ENCODE measurements at regions of chr17 and their contacts with region 1.

Region 1: DNA sequence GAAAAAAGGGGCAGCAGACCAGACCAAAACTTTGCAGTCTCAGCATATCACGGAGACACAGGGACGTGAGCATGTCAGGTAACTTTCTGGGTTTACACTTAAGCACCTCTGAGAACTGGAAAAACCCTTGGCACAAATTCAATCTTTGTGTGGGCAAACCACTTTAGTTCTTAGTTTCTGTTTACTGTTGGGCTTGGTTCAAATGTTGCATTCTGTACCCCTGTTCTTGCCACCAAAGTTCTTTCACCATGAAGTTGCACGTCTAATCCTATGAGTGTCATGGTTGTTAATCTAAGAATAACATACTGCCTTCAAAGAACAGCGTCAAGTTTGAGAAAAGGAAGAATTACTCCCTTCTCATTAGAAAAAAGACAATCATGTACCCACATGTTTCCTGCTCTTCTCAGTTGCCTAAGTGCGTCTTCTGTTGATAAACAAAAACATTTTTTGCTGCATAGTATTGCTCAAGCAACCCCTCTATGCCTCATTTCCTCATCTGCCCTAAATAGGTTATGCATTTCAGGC is 11.6 kb downstream of the KRT33A start:
- DNase-seq: peak; percentile 47
- H3K4me3 Mint-ChIP-seq: no peak overlapping the region
- H3K27ac Mint-ChIP-seq: peak overlapping the region; percentile 48
- H3K4me1 Mint-ChIP-seq: peaks cover 85% of the 10 kb centered on the region
- H3K27me3 Mint-ChIP-seq: no peaks in the 10 kb centered on the region

Region 2: DNA sequence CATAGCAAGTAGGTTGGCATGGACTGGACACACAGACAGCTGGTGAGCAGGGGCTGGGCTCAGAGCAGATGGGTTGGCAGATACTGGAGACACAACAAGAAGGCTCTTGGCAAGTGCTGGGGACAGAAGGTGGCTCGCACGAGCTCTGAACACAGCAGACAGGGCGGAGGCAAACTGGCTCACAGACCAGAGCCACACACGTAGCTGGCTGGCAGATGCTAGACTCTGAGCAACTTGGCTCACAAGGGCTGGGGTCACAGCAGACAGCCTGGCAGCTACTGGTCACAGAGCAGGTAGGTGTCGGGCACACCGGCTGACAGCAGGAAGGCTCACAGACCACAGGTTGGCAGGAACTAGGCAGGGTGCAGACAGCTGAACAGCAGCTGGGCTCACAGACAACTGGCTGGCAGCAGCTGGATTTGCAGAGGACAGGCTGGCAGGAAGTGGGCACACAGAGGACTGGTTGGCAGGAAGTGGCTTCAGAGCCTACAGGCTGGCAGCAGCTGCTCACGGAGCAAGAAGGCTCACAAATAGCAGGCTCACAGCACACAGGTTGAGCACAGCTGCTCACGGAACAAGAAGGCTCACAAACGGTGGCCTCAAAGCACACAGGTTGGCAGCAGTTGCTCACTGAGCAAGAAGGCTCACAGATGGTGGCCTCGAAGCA is 30.6 kb before region 1 on chr17:
- CTCF ChIA-PET with region 1: no interaction called
- intact Hi-C with region 1: loop called (anchors 2 kb)
- DNase-seq: peak; percentile 76
- H3K4me3 Mint-ChIP-seq: peak overlapping the region; percentile 52
- H3K27ac Mint-ChIP-seq: peak overlapping the region; percentile 10
- H3K4me1 Mint-ChIP-seq: peaks cover 47% of the 10 kb centered on the region
- H3K27me3 Mint-ChIP-seq: no peaks in the 10 kb centered on the region

Region 3: GRCh38 chr17:41403798-41404671 is 65.0 kb after region 1 on chr17:
- CTCF ChIA-PET with region 1: interaction called, 4 read pairs
- intact Hi-C with region 1: loop called (anchors 1 kb)
- DNase-seq: peak; percentile 85
- H3K4me3 Mint-ChIP-seq: no peak overlapping the region
- H3K27ac Mint-ChIP-seq: peak overlapping the region; percentile 79
- H3K4me1 Mint-ChIP-seq: peaks cover 46% of the 10 kb centered on the region
- H3K27me3 Mint-ChIP-seq: no peaks in the 10 kb centered on the region

Region 4: GRCh38 chr17:41464682-41465081 is 125.7 kb after region 1 on chr17:
- CTCF ChIA-PET with region 1: no interaction called
- intact Hi-C with region 1: no loop called
- DNase-seq: no peak
- H3K4me3 Mint-ChIP-seq: no peak overlapping the region
- H3K27ac Mint-ChIP-seq: no peak overlapping the region
- H3K4me1 Mint-ChIP-seq: no peaks in the 10 kb centered on the region
- H3K27me3 Mint-ChIP-seq: no peaks in the 10 kb centered on the region

Measured in activated naive CD4-positive, alpha-beta T cell treated with anti-CD3 and anti-CD28 coated beads for 36 hours (primary cell).